ENCODE measurements at regions of chr12 and their contacts with region 1.

Region 1: DNA sequence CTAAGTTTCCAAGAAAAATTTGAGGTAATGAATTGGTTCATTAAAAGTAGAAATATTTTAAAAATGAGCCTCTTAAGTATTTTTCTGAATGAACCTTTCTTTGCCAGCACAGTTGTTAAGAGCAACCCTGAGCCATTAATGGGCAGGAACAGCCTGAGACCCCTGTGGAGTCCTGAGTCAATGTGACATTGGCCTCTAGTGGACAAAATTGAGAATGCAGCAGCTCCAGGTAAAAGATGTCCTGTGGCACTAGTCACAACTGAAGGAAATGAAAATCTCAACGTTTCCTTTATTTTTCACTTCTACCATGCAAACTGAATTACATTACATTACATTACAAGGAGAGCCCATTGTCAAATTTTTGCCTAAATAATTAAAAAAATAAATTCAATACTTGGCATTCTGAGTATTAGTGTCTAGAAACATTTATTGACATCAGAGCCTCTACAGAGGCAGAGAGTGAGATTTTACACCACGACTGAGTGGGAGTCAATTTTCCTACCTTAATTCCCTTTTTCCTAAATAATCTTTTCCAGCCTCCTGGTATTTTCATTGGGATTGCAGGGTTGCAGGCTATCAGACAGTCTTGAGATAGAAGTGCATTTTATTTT is 135.7 kb downstream of the PPM1H start:
- DNase-seq: peak; percentile 50 to 88
- H3K4me3 ChIP-seq: no peak overlapping the region
- H3K27ac ChIP-seq: no peak overlapping the region
- H3K4me1 ChIP-seq: peaks cover 0 to 5% (median 0%) of the 10 kb centered on the region in 4 experiments; a peak in 3 of 7 replicates
- H3K27me3 ChIP-seq: no peaks in the 10 kb centered on the region
- CTCF ChIP-seq: peak; percentile 54 to 92 (median 90)
- EP300 ChIP-seq: no peak
- POLR2A ChIP-seq: no peak
- RAD21 ChIP-seq: peak; percentile 94 to 97

Region 2: GRCh38 chr12:62435303-62436163 is 363.7 kb before region 1 on chr12:
- CTCF ChIA-PET with region 1: interaction called, 86 read pairs
- POLR2A ChIA-PET with region 1: no interaction called
- DNase-seq: peak; percentile 31 to 75
- H3K4me3 ChIP-seq: peak overlapping the region; percentile 37 to 71 (median 67)
- H3K27ac ChIP-seq: no peak overlapping the region
- H3K4me1 ChIP-seq: peaks cover 0 to 5% (median 0%) of the 10 kb centered on the region in 4 experiments; a peak in 4 of 7 replicates
- H3K27me3 ChIP-seq: peaks cover 8 to 25% (median 19%) of the 10 kb centered on the region in 4 experiments
- CTCF ChIP-seq: peak; percentile 54 to 79 (median 77)
- EP300 ChIP-seq: no peak
- POLR2A ChIP-seq: no peak
- RAD21 ChIP-seq: peak; percentile 48 to 58

Region 3: GRCh38 chr12:62575036-62575435 is 224.2 kb before region 1 on chr12:
- CTCF ChIA-PET with region 1: interaction called, 173 read pairs
- POLR2A ChIA-PET with region 1: no interaction called
- DNase-seq: no peak
- H3K4me3 ChIP-seq: no peak overlapping the region
- H3K27ac ChIP-seq: no peak overlapping the region
- H3K4me1 ChIP-seq: no peaks in the 10 kb centered on the region
- H3K27me3 ChIP-seq: no peaks in the 10 kb centered on the region
- CTCF ChIP-seq: no peak
- EP300 ChIP-seq: no peak
- POLR2A ChIP-seq: no peak
- RAD21 ChIP-seq: no peak

Region 4: GRCh38 chr12:62581288-62582064 is 217.8 kb before region 1 on chr12:
- CTCF ChIA-PET with region 1: interaction called, 173 read pairs
- POLR2A ChIA-PET with region 1: interaction called, 4 read pairs
- DNase-seq: no peak
- H3K4me3 ChIP-seq: no peak overlapping the region
- H3K27ac ChIP-seq: no peak overlapping the region
- H3K4me1 ChIP-seq: no peaks in the 10 kb centered on the region
- H3K27me3 ChIP-seq: no peaks in the 10 kb centered on the region
- CTCF ChIP-seq: peak in 2 of 3 experiments; percentile 46 to 56; a peak in 2 of 4 replicates
- EP300 ChIP-seq: no peak
- POLR2A ChIP-seq: no peak
- RAD21 ChIP-seq: peak; percentile 73 to 74

Region 5: DNA sequence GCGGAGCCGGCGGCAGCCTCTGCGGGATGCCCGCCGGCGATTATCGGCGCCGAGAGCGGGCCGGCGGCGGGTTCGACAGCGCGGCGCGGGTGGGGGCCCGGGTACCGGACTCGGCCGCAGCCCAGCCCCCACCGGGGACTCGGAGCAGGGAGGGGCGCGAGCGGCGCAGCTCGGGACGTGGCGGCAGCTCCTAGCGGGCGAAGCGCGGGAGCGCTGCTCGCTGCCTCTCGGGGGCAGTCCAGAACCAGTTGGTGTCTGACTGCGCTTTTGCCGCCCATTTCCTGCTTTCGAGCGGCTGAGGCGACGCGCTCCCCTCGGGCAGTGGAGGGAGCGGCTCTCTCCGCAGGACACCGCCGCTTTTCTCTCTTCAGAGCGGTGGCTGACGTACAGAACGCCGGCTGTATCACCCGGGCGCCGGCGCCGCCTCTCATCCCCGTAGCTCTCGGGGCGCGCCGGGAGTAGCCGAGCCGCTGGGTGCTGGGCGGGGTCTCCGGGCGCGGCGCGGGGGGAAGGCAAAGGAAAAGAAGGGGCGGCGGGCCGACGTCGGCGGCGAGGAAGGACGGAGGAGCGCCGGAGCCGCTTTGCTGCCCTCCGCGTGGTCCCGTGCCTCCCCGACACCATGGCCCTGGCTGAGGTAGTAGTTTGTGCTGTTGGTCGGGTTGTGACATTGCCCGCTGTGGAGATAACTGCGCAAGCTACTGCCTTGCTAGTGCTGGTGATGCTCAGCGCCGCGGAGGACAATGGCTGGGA is 196.0 kb before region 1 on chr12:
- CTCF ChIA-PET with region 1: interaction called, 12 read pairs
- POLR2A ChIA-PET with region 1: interaction called, 27 read pairs
- DNase-seq: peak; percentile 44 to 84
- H3K4me3 ChIP-seq: peak overlapping the region; percentile 72 to 79 (median 73)
- H3K27ac ChIP-seq: peak overlapping the region; percentile 99
- H3K4me1 ChIP-seq: peaks cover 0 to 6% (median 4%) of the 10 kb centered on the region in 4 experiments; a peak in 5 of 7 replicates
- H3K27me3 ChIP-seq: no peaks in the 10 kb centered on the region
- CTCF ChIP-seq: peak; percentile 45 to 62 (median 45)
- EP300 ChIP-seq: peak in 1 of 2 experiments; percentile 2; a peak in 1 of 3 replicates
- POLR2A ChIP-seq: peak; percentile 24 to 49
- RAD21 ChIP-seq: peak; percentile 46 to 55

Region 6: DNA sequence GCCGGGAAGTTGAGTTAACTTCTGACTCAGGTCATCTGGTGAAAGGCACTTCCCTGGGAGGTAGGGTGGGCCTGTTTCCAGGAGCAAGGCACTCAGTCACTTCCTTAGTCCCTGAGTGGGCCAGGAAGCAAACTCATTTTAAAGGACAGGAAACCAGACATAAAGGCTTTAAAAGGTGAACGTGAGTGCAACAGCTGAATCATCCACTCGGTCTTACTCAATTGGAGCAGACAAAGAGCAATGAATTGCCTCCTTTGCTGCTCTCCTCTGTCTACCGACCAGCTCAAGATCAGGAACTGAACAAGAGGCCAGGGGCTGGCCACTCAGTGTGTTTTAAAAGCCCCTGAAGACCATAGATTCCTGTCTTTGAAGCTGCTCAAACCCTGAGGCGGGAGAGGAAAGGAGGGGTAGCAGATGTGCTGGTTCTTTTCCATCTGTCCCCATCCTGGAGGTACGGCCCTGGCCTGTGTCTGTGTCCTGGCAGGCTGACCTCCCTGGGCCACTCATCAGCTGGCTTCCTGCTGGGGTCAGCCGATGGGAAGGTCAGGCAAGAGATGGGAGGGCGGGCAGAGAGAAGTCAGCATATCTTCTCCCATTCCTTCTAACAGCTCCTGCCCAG is 13.2 kb before region 1 on chr12:
- CTCF ChIA-PET with region 1: interaction called, 96 read pairs
- POLR2A ChIA-PET with region 1: interaction called, 5 read pairs
- DNase-seq: no peak
- H3K4me3 ChIP-seq: no peak overlapping the region
- H3K27ac ChIP-seq: no peak overlapping the region
- H3K4me1 ChIP-seq: peaks cover 0 to 6% (median 4%) of the 10 kb centered on the region in 4 experiments; a peak in 4 of 7 replicates
- H3K27me3 ChIP-seq: no peaks in the 10 kb centered on the region
- CTCF ChIP-seq: no peak
- EP300 ChIP-seq: no peak
- POLR2A ChIP-seq: no peak
- RAD21 ChIP-seq: no peak

Region 7: GRCh38 chr12:62813031-62813829 is 14.0 kb after region 1 on chr12:
- CTCF ChIA-PET with region 1: interaction called, 81 read pairs
- POLR2A ChIA-PET with region 1: no interaction called
- DNase-seq: peak; percentile 31 to 57
- H3K4me3 ChIP-seq: no peak overlapping the region
- H3K27ac ChIP-seq: no peak overlapping the region
- H3K4me1 ChIP-seq: peaks cover 0 to 6% (median 2%) of the 10 kb centered on the region in 4 experiments; a peak in 3 of 7 replicates
- H3K27me3 ChIP-seq: no peaks in the 10 kb centered on the region
- CTCF ChIP-seq: peak; percentile 80 to 91 (median 88)
- EP300 ChIP-seq: no peak
- POLR2A ChIP-seq: no peak
- RAD21 ChIP-seq: peak; percentile 82 to 85